A673 (cell line): ENCODE measurements at regions of chr1 and their contacts with region 1.

Region 1: DNA sequence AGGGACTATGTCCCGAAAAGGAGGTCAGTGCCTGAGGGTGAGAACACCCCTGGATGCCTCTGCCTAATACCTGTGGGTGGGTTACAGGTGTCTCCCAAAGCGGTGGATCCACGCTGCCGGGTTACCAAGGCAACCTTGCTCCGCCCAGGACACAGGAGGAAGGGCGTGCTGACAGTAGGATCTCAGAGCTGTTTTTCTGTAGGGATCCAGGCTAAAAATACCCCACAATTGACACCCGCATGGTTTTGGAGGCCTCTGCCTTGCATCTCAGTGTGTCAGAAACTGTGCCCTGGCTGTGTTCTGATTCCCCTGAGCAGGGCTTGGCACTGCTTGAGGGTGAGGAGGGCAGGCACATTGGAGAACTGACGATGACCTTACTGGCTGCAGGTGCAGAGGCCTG is 118.0 kb downstream of the IER5 start:
- DNase-seq: no peak
- H3K4me3 ChIP-seq: no peak overlapping the region
- H3K27ac ChIP-seq: no peak overlapping the region
- H3K4me1 ChIP-seq: no peaks in the 10 kb centered on the region
- H3K27me3 ChIP-seq: peaks cover 21% of the 10 kb centered on the region
- CTCF ChIP-seq: no peak

Region 2: DNA sequence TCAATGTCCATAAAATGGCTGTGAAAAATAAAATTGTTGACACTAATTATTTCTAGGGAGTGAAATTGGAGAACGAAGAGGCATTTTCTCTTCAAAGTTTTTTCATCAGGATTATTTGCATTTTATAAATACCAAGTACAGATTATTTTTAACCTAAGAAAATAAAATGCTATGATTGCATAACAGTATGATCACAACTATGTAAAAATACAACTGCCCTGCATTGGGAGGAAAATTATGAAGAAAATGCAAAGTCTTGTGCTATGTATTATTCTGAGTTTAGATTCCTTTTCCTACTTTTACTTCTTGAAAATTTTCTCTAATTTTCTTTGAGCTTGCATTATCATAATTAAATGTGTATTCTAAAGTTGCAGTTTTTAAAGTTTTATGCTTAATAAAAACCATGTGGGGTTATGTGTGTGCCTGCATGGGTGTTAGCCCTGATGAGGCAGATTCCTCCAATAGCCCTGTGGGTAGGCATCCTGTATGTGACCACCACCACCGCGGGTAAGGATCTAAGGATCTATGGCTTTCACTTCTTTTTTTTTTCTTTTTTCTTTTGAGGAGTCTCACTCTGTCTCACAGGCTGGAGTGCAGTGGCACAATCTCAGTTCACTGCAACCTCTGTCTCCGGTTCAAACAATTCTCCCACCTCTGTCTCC is 208.5 kb before region 1 on chr1:
- CTCF ChIA-PET with region 1: no interaction called
- POLR2A ChIA-PET with region 1: interaction called, 12 read pairs
- intact Hi-C with region 1: no loop called
- DNase-seq: no peak
- H3K4me3 ChIP-seq: no peak overlapping the region
- H3K27ac ChIP-seq: no peak overlapping the region
- H3K4me1 ChIP-seq: no peaks in the 10 kb centered on the region
- H3K27me3 ChIP-seq: no peaks in the 10 kb centered on the region
- CTCF ChIP-seq: no peak

Region 3: DNA sequence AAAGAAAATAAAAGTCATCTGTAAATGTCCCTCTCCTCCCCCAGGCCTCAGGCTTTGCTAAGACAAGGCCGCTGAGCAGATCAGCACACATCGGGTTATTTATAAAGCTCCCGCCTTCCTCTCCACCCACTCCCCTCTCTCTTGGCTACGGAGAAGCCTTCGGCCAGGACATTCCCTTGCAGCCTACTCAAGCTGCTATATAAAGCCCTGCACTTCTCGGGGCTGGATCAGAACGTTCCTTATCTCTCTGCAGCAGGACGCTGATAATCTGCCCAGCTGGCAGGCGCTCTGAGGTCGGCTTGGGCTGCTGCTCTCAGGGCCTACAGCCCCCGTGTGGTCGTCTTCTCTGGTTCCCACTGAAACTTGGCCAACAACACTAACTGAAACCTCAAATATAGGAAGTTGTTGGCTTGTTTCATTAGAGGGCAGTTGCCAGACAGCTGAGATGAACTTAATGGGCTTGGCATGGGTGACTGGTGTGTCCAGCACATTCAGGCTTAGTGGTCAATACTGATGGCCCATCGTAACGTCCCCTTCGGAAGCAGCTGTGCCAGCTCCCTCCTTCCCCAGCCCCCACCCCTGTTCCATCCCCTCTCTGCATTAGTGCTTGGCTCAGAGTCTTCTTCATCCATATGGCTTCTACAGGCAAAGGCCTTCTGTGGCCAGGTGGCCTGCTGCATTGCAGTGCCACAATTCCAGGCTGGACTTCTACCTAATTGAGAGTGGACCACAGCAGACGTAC is 53.5 kb before region 1 on chr1:
- CTCF ChIA-PET with region 1: no interaction called
- POLR2A ChIA-PET with region 1: no interaction called
- intact Hi-C with region 1: no loop called
- DNase-seq: no peak
- H3K4me3 ChIP-seq: no peak overlapping the region
- H3K27ac ChIP-seq: no peak overlapping the region
- H3K4me1 ChIP-seq: no peaks in the 10 kb centered on the region
- H3K27me3 ChIP-seq: no peaks in the 10 kb centered on the region
- CTCF ChIP-seq: no peak

Region 4: GRCh38 chr1:181680332-181680731 is 473.8 kb after region 1 on chr1:
- CTCF ChIA-PET with region 1: no interaction called
- POLR2A ChIA-PET with region 1: no interaction called
- intact Hi-C with region 1: no loop called
- DNase-seq: no peak
- H3K4me3 ChIP-seq: no peak overlapping the region
- H3K27ac ChIP-seq: no peak overlapping the region
- H3K4me1 ChIP-seq: no peaks in the 10 kb centered on the region
- H3K27me3 ChIP-seq: peaks cover 60% of the 10 kb centered on the region
- CTCF ChIP-seq: no peak